Right cardiac atrium (tissue), 5 donors: ENCODE measurements at regions of chr3 and their contacts with region 1.

Region 1: DNA sequence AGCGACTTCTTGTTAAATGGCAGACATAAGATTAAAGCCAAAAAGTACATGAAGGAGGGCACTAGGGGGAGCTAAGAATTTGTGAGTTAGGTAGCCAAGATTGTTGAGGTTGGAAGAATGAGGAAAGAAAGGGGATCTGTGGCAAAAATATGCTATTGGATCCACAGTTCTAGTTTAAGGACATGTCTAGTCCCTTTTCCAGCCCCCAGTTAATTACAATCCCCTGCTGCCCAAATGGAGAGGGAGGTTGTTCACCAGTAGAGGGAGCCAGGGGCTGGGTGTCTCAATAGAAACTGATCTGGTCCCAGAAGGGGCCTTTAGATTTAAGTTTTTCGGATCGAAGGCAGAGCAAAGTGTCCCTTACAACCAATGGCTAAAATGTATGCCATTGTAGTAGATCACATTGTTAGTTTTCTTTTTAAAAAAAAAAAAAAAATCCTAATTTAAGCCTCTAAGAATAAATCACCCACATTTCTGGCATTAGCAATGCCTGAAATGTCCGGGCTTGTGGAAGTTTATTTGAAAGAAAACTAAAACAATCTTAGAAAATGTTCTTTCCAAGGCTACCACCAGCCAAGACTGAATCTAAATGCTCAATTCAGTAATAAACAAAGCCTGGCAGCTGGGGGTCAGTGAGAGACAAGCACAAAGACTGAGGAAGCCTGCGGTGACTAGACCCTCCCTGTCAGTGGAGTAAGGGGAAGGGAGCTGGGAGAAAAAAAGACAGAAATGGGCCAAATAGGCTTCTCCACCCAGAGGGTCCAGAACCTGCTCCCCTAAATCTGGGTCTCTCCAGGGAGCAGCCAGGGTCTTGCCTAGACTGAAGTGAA is 7.1 kb downstream of the COL8A1 start:
- DNase-seq: no peak
- ATAC-seq: peak; percentile 12 to 18
- H3K4me3 ChIP-seq: no peak overlapping the region
- H3K27ac ChIP-seq: peak overlapping the region; percentile 67
- H3K4me1 ChIP-seq: no peaks in the 10 kb centered on the region
- H3K27me3 ChIP-seq: no peaks in the 10 kb centered on the region

Region 2: DNA sequence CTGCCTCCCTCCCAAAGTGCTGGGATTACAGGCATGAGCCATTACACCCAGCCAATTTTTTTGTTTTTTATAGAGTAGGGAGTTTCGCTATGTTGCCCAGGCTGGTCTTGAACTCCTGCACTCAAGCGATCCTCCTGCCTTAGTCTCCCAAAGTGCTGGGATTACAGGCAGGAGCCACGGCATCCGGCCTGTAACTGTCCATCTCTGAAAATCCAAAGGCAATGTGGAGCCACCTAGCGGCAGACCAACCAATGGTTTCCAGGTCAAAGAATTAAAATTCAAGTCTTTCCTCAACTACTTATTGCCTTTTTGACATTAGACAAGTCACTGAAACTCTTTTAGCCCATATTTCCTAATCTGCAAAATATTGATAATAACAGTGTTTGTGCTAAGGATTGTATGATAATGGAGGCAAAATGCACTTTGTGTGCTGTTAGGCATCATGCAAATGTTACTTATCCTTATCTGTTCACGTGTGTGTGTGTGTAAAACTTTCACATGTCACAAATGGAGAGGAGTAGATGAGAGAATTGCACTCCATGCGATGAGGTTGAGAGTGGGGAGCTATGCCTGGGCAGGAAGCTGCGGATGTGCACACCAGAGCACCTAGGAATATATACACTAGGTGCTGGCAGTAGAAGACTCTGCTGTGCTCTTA is 41.6 kb after region 1 on chr3:
- intact Hi-C with region 1: loop called in 1 of 4 experiments (anchors 5 kb)
- DNase-seq: peak; percentile 60 to 85 (median 74)
- ATAC-seq: peak; percentile 43 to 69
- H3K4me3 ChIP-seq: no peak overlapping the region
- H3K27ac ChIP-seq: no peak overlapping the region
- H3K4me1 ChIP-seq: no peaks in the 10 kb centered on the region
- H3K27me3 ChIP-seq: no peaks in the 10 kb centered on the region

Region 3: GRCh38 chr3:99774467-99774866 is 129.0 kb after region 1 on chr3:
- intact Hi-C with region 1: no loop called
- DNase-seq: no peak
- ATAC-seq: peak; percentile 64 to 70
- H3K4me3 ChIP-seq: no peak overlapping the region
- H3K27ac ChIP-seq: no peak overlapping the region
- H3K4me1 ChIP-seq: no peaks in the 10 kb centered on the region
- H3K27me3 ChIP-seq: no peaks in the 10 kb centered on the region